Dorsolateral prefrontal cortex (tissue), 120 donors: ENCODE measurements at regions of chr11 and their contacts with region 1.

Region 1: DNA sequence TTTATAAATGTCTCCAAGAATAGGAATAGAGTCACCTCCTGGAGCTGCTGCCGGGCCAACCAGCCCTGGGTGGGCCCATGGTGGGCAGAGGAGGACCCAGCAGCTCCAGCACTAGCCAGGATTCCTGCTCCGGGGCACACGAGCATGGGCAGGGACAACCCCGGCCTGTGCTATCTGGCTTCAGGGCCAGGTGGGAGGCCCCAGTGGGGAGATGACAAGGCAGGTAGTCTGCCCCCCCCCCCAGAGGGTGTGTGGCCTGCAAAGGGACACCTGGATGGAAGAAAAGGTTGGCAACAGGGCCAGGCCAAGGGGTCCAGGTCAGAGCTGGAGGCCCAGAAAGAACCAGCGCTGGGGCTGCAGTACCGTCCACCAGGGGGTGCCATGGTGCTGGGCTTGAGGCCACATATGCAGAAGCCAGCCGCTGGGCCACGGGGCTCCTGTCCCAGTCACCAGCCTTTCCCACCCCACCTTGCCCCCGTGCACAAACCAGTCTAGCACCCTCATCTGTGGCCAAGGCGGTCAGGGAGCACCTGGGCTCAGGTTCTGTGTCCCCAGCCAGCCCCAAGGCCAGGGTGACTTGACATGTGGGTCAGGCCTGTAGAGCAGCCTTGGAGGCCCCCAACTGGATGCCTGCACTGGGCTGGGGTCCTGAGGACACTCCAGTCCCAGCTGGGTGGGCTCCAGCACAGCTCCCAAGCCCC is 3.5 kb downstream of the TSPAN32 start:
- DNase-seq: peak; percentile 72 to 85 (median 82)
- H3K4me3 ChIP-seq: no peak overlapping the region
- H3K27ac ChIP-seq: peak overlapping the region in 10 of 59 donors; percentile 6 to 82 (median 48)
- H3K27me3 ChIP-seq: no peaks in the 10 kb centered on the region
- CTCF ChIP-seq: peak; percentile 46 to 96 (median 90)

Region 2: GRCh38 chr11:2196970-2197770 is 108.1 kb before region 1 on chr11:
- intact Hi-C with region 1: loop called in 1 of 2 experiments (anchors 5 kb)
- DNase-seq: peak; percentile 41 to 82 (median 70)
- H3K4me3 ChIP-seq: no peak overlapping the region
- H3K27ac ChIP-seq: no peak overlapping the region
- H3K27me3 ChIP-seq: peaks cover 0 to 6% (median 0%) of the 10 kb centered on the region in 45 donors
- CTCF ChIP-seq: peak in 54 of 56 donors; percentile 30 to 74 (median 60)

Region 3: DNA sequence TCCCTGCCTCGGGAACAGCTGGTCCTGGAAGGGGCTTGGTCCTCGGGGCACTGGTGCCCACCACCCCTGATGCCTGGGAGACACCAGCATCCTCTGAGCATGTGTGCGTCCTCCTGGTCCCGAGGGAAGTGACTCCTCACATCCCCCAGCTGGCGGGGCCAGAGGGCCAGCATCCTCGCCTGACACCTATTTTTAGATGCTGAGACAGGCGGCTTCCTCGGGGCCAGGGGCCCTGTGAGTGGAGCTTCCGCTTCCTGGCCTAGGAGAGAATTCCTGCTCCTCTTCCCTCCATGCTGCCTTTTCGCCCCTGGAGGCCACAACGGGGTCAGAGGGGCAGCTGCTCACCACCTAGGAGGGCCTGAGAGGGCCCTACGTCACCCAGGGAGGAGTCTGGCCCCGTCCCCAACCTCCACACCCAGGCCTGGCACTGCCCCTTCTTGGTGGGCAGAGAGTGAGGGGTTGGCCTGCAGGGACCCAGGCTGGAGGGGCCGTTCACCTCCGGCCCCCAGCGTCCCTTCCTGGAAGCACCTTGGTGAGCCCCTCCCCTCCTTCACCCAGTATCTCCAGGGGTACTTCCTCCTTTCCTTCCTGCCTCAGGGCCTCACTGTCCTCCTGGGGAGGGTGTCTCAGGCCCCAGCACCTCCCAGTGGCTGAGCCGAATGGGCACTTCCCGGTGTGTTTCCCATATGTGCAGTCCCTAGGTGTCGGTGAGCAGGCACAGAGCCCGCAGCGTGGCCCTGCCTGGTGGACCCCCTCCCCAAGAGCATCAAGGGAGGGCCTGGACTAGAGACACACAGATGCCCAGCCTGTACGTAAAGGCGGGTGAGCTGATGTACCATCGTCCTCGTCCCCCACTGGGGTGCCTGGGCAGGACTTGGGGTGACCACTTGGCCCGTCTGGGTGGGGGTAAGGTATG is 77.9 kb after region 1 on chr11:
- intact Hi-C with region 1: loop called (anchors 5 kb)
- DNase-seq: no peak
- H3K4me3 ChIP-seq: peak overlapping the region in 34 of 59 donors; percentile 1 to 98 (median 22)
- H3K27ac ChIP-seq: peak overlapping the region; percentile 37 to 96 (median 83)
- H3K27me3 ChIP-seq: no peaks in the 10 kb centered on the region
- CTCF ChIP-seq: peak in 3 of 56 donors; percentile 9 to 11 (median 10)

Region 4: DNA sequence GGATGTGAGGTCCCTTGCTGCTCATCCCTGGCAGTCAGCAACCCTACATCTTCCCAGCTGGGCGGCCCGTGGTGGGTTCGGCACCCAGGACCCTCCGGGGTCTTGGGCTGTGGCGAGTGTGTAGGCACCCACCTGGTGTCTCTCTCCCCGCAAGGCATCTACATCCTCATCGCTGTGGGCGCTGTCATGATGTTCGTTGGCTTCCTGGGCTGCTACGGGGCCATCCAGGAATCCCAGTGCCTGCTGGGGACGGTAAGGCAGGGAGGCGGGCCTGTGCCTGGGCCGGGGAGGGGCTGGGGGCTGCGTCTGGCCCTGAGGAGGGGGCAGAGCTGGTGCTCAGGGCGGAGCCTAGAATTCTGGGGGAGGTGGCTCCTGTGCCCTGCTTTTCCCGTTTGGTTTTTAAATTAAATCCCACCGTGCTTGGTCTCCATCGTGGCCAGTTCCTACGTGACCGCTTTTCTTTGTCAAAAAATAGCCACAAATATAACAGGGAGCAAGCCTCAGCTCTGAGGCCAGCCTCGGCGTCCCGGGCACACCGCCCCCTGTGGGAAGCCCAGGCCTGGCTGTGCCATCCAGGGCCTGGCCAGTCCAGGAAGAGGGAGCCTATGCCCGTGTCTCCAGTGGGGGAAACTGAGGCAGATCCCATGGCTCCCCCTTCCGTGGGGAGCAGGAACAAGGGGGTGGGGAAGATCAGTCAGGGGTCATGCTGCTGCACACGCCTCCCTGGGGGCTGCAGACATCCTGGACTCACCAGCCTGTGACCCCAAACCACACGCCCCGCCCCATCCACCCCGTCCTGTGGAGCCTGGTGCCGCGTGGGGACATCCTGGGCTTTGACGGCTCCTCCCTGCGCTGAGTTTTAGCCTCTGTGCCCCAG is 88.9 kb after region 1 on chr11:
- intact Hi-C with region 1: no loop called
- DNase-seq: no peak
- H3K4me3 ChIP-seq: no peak overlapping the region
- H3K27ac ChIP-seq: peak overlapping the region in 7 of 59 donors; percentile 9 to 90 (median 22)
- H3K27me3 ChIP-seq: no peaks in the 10 kb centered on the region
- CTCF ChIP-seq: no peak

Region 5: GRCh38 chr11:2420502-2421225 is 115.4 kb after region 1 on chr11:
- intact Hi-C with region 1: loop called (anchors 1 to 2 kb)
- DNase-seq: peak in 9 of 10 donors; percentile 54 to 79 (median 65)
- H3K4me3 ChIP-seq: peak overlapping the region in 25 of 59 donors; percentile 4 to 43 (median 28)
- H3K27ac ChIP-seq: peak overlapping the region in 3 of 59 donors; percentile 32 to 67 (median 46)
- H3K27me3 ChIP-seq: no peaks in the 10 kb centered on the region
- CTCF ChIP-seq: peak; percentile 64 to 99 (median 94)

Region 6: DNA sequence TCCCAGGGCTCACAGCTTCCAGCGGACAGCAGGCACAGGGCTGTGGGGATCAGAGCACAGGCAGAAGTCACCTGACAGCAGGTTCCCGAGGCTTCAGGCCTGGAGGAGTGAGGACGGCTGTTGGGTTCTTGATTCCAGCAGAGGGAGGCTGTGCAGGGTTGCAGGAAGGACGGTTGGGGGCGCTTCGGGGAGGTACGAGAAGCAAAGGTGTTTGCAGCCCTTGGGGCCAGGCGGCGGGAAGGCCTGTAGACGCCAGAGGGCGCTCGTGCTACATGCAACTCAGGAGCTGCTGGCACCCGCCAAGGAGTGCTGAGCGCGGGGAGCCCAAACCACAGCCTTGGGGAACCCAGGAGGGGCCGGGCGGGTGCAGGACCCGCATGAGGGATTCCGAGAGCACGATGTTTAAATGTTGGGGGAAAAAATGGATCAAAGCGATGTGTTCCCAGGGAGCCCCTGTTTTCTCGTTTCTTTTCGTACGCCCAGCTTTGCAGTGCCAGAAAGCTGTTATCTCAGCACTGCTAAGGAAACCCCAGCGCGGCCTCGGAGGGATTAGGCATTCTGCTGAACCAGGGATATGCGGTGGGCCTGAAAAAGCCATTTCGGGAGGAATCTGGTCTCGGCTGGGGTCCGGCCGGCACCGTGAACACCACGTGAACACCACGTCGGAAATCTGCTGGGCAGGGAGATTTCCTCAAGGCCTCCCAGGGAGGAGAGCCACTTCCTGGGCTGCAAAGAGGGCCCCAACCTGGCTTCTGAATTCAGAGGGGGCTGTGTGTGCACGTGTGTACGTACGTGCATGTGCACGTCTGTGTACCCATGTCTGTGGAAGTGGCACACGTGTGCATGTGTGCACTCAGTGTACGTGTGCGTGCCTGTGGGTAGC is 227.7 kb after region 1 on chr11:
- intact Hi-C with region 1: loop called (anchors 5 to 10 kb)
- DNase-seq: peak; percentile 86 to 93 (median 91)
- H3K4me3 ChIP-seq: peak overlapping the region in 54 of 59 donors; percentile 12 to 58 (median 39)
- H3K27ac ChIP-seq: peak overlapping the region in 7 of 59 donors; percentile 5 to 51 (median 33)
- H3K27me3 ChIP-seq: peaks cover 0 to 3% (median 0%) of the 10 kb centered on the region in 45 donors
- CTCF ChIP-seq: peak; percentile 96 to 100 (median 99)